MCF 10A (cell line): ENCODE measurements at regions of chr3 and their contacts with region 1.

Region 1: GRCh38 chr3:155217591-155217990 is 75.9 kb downstream of the STRIT1 start:
- DNase-seq: peak; percentile 55
- H3K4me3 Mint-ChIP-seq: no peak overlapping the region
- H3K27ac Mint-ChIP-seq: peak overlapping the region; percentile 77
- H3K4me1 Mint-ChIP-seq: peaks cover 20% of the 10 kb centered on the region
- H3K27me3 Mint-ChIP-seq: no peaks in the 10 kb centered on the region
- CTCF ChIP-seq: no peak

Region 2: GRCh38 chr3:155232605-155233004 is 15.0 kb after region 1 on chr3:
- CTCF ChIA-PET with region 1: no interaction called
- POLR2A ChIA-PET with region 1: interaction called, 14 read pairs
- intact Hi-C with region 1: no loop called
- DNase-seq: peak; percentile 96
- H3K4me3 Mint-ChIP-seq: peak overlapping the region; percentile 1
- H3K27ac Mint-ChIP-seq: peak overlapping the region; percentile 90
- H3K4me1 Mint-ChIP-seq: peaks cover 34% of the 10 kb centered on the region
- H3K27me3 Mint-ChIP-seq: no peaks in the 10 kb centered on the region
- CTCF ChIP-seq: no peak